Mammary epithelial cell (primary cell): ENCODE measurements at regions of chr2 and their contacts with region 1.

Region 1: GRCh38 chr2:74206180-74206688 is 7.8 kb downstream of the MTHFD2 start:
- DNase-seq: no peak
- H3K4me3 ChIP-seq: no peak overlapping the region
- H3K27ac ChIP-seq: peak overlapping the region; percentile 50
- H3K4me1 ChIP-seq: peaks cover 24% of the 10 kb centered on the region
- H3K27me3 ChIP-seq: no peaks in the 10 kb centered on the region
- CTCF ChIP-seq: no peak

Region 2: GRCh38 chr2:74168739-74169138 is 37.5 kb before region 1 on chr2:
- CTCF ChIA-PET with region 1: no interaction called
- dilution Hi-C with region 1: no loop called
- in situ Hi-C with region 1: no loop called
- intact Hi-C with region 1: loop called (anchors 5 kb)
- DNase-seq: no peak
- H3K4me3 ChIP-seq: no peak overlapping the region
- H3K27ac ChIP-seq: no peak overlapping the region
- H3K4me1 ChIP-seq: no peaks in the 10 kb centered on the region
- H3K27me3 ChIP-seq: no peaks in the 10 kb centered on the region
- CTCF ChIP-seq: no peak